Astrocyte of the cerebellum (primary cell): ENCODE measurements at regions of chr16 and their contacts with region 1.

Region 1: DNA sequence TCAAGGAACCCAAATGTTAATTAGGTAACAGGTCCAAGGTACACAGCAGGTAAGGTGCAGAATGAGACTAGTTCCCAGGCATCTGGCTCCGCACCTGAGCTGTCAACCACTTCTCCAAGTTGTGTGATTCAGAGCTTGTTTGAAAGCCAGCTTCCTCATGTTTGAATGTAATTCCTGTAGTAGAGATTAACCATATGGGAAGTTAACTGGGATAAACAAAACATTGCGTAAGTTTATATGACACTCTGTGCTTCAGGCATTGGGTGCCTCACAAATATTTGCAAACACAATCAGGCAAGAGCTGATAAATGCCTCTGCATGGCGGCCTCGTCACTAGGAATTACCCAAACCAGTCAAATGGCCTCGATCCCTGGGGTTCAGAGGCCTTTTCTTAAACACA is 27.9 kb upstream of the CPHXL start:
- DNase-seq: no peak
- H3K4me3 ChIP-seq: no peak overlapping the region
- CTCF ChIP-seq: no peak

Region 2: GRCh38 chr16:75647492-75648264 is 106.5 kb before region 1 on chr16 and contains the starts of genes KARS1 and TERF2IP:
- in situ Hi-C with region 1: loop called (anchors 5 kb)
- DNase-seq: peak; percentile 77
- H3K4me3 ChIP-seq: peak within 1 kb of the TSS; percentile 86
- CTCF ChIP-seq: no peak

Region 3: DNA sequence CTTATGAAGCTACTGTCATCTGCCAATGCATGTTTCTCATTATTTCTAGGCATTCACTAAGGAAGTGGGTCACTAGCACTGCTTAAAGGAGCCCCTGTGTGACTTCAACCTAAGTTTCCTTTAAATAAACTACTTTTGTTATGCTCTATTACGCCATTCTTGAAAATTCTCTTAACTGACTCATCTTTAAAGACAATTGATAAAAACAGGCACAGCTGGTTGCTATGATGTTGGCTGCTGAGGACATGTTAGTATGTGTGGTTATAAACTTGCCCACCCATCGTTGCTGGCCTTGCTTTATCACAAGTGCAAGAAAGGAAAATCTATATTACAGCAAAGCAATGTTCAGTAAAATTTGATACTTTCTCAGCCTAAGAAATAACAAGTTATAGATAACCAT is 447.2 kb after region 1 on chr16:
- in situ Hi-C with region 1: no loop called
- DNase-seq: no peak
- H3K4me3 ChIP-seq: no peak overlapping the region
- CTCF ChIP-seq: no peak